Upper lobe of right lung (tissue), 1 donor: ENCODE measurements at regions of chr7 and their contacts with region 1.

Region 1: DNA sequence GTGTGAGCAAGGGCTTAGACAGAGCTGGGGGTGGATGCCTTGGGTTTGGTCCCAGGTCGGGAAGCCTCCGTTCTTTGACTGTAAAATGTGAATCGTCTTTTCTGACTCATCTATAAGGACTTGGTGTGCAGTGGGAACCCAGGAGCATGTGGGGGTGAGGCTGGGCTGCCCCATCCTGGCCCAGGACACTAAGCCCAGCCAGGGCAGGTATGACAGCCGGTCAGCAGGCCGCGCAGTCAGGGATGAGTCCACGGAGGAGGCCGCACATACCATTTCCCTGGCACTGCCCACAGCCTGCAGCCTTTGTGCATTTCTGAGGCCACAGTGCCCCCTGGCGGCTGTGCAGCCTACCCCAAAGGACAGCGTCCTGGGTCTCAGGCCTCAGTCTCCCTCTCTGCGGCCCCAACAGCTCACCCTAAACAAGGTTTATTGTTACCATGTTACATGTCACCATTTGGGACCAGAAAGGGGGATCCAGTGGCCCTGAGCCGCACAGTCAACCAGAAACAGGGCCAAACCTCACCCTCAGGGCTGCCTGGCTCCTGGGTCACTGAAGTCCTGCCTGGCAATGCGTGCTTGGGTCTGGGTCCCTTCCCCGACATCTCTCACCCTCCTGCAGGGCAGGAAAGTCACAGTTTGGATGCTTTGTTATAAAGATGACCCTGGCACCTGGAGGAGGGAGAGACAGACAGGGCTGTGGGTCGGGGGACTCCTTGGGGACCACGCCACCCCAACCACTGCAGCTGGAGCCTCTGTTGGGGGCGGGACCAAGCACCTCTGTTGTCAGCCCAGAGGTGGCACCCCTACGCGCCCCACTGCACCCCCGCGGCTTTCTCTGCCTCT is 14.4 kb upstream of the SH2B2 start:
- DNase-seq: peak; percentile 88
- ATAC-seq: peak; percentile 90
- H3K4me3 ChIP-seq: no peak overlapping the region
- H3K27ac ChIP-seq: no peak overlapping the region
- H3K4me1 ChIP-seq: no peaks in the 10 kb centered on the region
- H3K27me3 ChIP-seq: no peaks in the 10 kb centered on the region
- CTCF ChIP-seq: peak; percentile 90

Region 2: GRCh38 chr7:101542527-101543241 is 729.6 kb before region 1 on chr7:
- intact Hi-C with region 1: loop called (anchors 5 kb)
- DNase-seq: no peak
- ATAC-seq: peak; percentile 74
- H3K4me3 ChIP-seq: no peak overlapping the region
- H3K27ac ChIP-seq: no peak overlapping the region
- H3K4me1 ChIP-seq: no peaks in the 10 kb centered on the region
- H3K27me3 ChIP-seq: no peaks in the 10 kb centered on the region
- CTCF ChIP-seq: peak; percentile 92

Region 3: DNA sequence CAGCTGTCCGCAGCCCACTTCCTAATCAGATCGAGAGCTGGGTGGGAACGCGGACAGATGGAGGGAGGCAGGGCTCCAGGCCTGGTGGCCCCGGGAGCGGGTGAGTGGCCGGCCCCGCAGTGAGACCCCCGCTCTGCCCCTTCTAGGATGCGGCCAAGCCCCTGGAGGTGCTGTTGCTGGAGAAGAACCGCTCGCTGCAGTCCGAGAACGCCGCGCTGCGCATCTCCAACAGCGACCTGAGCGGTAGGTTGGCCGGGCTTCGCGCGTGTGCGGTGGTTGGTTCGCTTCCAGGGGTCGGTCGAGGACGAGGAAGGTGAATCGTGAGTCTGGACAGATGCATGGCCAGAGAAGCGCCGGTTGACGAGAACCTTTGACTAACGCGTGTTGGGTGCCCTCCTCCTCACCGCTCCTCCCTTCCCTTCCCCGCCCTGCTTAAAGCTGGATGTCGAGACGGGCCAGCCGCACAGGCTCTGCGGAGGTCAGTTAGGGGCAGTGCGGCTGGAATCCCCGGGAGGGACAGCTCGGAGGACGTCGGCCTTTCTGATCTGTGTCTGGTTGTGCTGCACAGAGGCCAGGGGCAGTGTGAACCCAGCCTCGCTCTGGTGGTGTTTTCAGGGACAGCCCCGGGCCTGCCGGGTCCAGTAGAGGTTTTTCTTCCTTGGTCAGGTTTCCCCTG is 76.8 kb before region 1 on chr7:
- intact Hi-C with region 1: no loop called
- DNase-seq: no peak
- ATAC-seq: no peak
- H3K4me3 ChIP-seq: no peak overlapping the region
- H3K27ac ChIP-seq: no peak overlapping the region
- H3K4me1 ChIP-seq: no peaks in the 10 kb centered on the region
- H3K27me3 ChIP-seq: no peaks in the 10 kb centered on the region
- CTCF ChIP-seq: no peak

Region 4: GRCh38 chr7:102220960-102221800 is 51.1 kb before region 1 on chr7:
- intact Hi-C with region 1: no loop called
- DNase-seq: no peak
- ATAC-seq: no peak
- H3K4me3 ChIP-seq: no peak overlapping the region
- H3K27ac ChIP-seq: no peak overlapping the region
- H3K4me1 ChIP-seq: no peaks in the 10 kb centered on the region
- H3K27me3 ChIP-seq: no peaks in the 10 kb centered on the region
- CTCF ChIP-seq: no peak